Activated T-helper 2 cell treated with anti-CD3 and anti-CD28 coated beads, Interferon-gamma antibody, Interleukin-2, Interleukin-4, amounts not matched to agents 10 μg/mL and 5 μg/mL and 100 μg/mL, durations not matched to agents 14 hours and 24 hours and 36 hours (primary cell): ENCODE measurements at regions of chr10 and their contacts with region 1.

Region 1: GRCh38 chr10:78712147-78712546 is 356.6 kb upstream of the ZMIZ1 start:
- DNase-seq: no peak
- H3K4me3 Mint-ChIP-seq: no peak overlapping the region
- H3K27ac Mint-ChIP-seq: no peak overlapping the region
- H3K4me1 Mint-ChIP-seq: no peaks in the 10 kb centered on the region
- H3K27me3 Mint-ChIP-seq: no peaks in the 10 kb centered on the region

Region 2: GRCh38 chr10:78640796-78641636 is 71.1 kb before region 1 on chr10:
- intact Hi-C with region 1: no loop called
- DNase-seq: no peak
- H3K4me3 Mint-ChIP-seq: no peak overlapping the region
- H3K27ac Mint-ChIP-seq: no peak overlapping the region
- H3K4me1 Mint-ChIP-seq: peaks cover 5% of the 10 kb centered on the region
- H3K27me3 Mint-ChIP-seq: no peaks in the 10 kb centered on the region

Region 3: GRCh38 chr10:78688901-78689583 is 23.1 kb before region 1 on chr10:
- intact Hi-C with region 1: loop called (anchors 1 kb)
- DNase-seq: no peak
- H3K4me3 Mint-ChIP-seq: no peak overlapping the region
- H3K27ac Mint-ChIP-seq: no peak overlapping the region
- H3K4me1 Mint-ChIP-seq: no peaks in the 10 kb centered on the region
- H3K27me3 Mint-ChIP-seq: no peaks in the 10 kb centered on the region

Region 4: GRCh38 chr10:78727728-78728127 is 15.6 kb after region 1 on chr10:
- intact Hi-C with region 1: no loop called
- DNase-seq: no peak
- H3K4me3 Mint-ChIP-seq: no peak overlapping the region
- H3K27ac Mint-ChIP-seq: no peak overlapping the region
- H3K4me1 Mint-ChIP-seq: no peaks in the 10 kb centered on the region
- H3K27me3 Mint-ChIP-seq: peaks cover 15% of the 10 kb centered on the region

Region 5: DNA sequence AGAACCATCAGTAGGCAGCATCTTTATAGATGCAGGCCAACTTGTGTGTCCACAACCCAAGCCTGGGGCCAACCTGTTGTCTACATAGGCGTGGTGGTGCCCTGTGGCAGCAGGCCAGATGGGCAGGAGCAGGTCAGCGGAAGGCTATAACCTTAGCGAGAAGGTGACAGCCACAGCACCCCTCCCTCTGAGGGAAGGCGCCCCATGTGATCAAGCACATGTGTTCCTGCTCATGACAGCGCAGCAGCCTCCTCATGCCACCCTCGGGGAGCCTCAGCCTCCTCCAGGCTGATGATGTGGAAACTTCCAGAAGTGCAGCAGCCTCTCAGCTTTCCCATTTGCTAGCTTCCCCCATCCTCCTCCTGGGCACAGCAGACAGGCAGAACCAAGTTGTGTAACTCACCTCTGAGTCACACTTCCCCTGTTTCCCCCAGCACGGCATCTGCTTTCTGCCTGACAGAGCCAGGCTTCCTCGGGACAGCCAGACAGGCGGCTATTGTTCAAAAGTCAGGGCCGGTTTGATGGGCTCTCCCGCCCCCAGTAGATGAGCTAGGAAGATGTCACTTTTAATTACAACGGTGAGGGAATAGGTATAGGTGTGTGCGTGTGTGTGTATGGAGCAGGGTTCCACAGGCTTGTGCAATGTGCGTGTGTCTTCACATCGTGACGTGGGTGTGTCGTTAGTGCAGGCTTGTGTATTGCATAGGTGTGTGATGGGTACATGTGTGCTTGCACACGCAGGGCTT is 44.6 kb after region 1 on chr10:
- intact Hi-C with region 1: no loop called
- DNase-seq: no peak
- H3K4me3 Mint-ChIP-seq: no peak overlapping the region
- H3K27ac Mint-ChIP-seq: no peak overlapping the region
- H3K4me1 Mint-ChIP-seq: peaks cover 3% of the 10 kb centered on the region
- H3K27me3 Mint-ChIP-seq: peaks cover 8% of the 10 kb centered on the region